Breast epithelium (tissue), 4 donors: ENCODE measurements at regions of chrX and their contacts with region 1.

Region 1: DNA sequence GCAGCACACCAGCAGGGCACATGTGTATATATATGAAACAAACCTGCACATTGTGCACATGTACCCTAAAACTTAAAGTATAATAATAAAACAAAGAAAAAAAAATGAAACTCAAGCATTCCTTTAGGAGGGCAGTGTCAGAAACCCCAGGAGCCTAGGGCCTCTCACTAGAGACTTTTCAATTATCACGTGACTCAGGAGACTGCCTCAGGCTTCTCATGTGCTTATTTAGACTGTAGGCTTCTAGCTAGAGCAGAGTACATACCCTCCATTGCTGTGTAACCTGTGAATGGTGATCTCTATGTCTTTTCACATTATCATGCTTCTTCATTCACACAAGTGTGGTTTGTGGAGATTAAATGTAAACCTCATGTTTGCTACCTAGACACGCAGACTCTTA is 48.2 kb upstream of the MAGEH1 start:
- DNase-seq: no peak
- H3K4me3 ChIP-seq: no peak overlapping the region
- H3K27ac ChIP-seq: no peak overlapping the region
- H3K4me1 ChIP-seq: no peaks in the 10 kb centered on the region
- H3K27me3 ChIP-seq: peaks cover 0 to 16% of the 10 kb centered on the region in 2 donors
- CTCF ChIP-seq: no peak
- POLR2A ChIP-seq: no peak

Region 2: DNA sequence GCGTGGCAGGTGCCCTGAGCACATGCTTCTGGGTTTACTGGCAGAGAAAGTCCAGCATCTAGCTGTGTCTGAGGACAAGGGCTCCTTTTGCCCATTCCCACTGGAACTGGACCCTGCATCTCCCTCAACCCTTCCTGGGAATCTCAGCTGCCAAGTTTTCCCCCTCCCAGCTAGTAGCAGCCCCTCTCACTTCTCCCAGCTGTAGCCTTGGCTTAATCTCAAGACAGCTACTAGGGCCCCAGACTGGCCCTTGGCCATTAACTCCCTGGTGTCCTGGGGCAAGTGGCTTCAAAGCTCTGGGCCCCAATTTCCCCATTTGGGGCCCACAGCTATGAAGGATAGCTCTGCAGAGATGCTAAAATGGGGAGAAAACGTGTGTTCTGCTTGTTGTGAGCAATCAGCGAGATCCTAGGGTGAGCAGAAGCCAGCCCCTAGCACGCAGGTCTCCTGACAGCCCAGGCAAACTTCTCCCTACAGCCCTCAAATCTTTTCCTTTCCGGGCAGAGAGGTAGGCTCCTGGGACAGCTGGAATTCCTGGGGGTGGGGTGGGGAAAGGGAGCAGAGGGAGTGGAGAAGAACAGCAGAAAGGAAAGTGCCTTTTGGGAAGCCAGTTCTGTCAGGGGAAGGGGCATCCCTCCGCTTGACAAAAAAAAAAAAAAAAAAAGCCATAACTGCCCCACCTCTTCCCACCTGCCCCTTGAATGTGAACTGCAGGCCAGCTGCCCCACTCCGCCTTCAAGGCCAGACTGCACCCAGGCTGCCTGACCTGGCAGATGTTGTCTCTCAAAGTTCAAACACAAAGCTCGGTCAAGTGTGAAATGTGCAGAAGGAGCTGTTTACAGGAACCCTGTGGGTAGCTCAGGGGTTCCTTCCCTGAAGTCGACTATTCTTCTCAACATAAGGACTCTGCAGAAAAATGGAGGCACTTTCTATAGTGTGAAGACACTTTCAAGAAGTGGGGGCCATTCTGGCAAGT is 924.3 kb before region 1 on chrX:
- intact Hi-C with region 1: loop called (anchors 5 kb)
- DNase-seq: no peak
- H3K4me3 ChIP-seq: no peak overlapping the region
- H3K27ac ChIP-seq: no peak overlapping the region
- H3K4me1 ChIP-seq: no peaks in the 10 kb centered on the region
- H3K27me3 ChIP-seq: peaks cover 0 to 45% of the 10 kb centered on the region in 2 donors
- CTCF ChIP-seq: no peak
- POLR2A ChIP-seq: no peak